Activated CD4-positive, alpha-beta memory T cell treated with anti-CD3 and anti-CD28 coated beads, Interleukin-2, amount 10 ng/mL, durations not matched to agents 7 days and 5 days (primary cell): ENCODE measurements at regions of chr11 and their contacts with region 1.

Region 1: GRCh38 chr11:35066783-35067423 is 72.1 kb upstream of the CD44 start:
- DNase-seq: peak; percentile 62
- H3K4me3 Mint-ChIP-seq: peak overlapping the region; percentile 6
- H3K27ac Mint-ChIP-seq: peak overlapping the region; percentile 79
- H3K4me1 Mint-ChIP-seq: peaks cover 29% of the 10 kb centered on the region
- H3K27me3 Mint-ChIP-seq: peaks cover 4% of the 10 kb centered on the region

Region 2: DNA sequence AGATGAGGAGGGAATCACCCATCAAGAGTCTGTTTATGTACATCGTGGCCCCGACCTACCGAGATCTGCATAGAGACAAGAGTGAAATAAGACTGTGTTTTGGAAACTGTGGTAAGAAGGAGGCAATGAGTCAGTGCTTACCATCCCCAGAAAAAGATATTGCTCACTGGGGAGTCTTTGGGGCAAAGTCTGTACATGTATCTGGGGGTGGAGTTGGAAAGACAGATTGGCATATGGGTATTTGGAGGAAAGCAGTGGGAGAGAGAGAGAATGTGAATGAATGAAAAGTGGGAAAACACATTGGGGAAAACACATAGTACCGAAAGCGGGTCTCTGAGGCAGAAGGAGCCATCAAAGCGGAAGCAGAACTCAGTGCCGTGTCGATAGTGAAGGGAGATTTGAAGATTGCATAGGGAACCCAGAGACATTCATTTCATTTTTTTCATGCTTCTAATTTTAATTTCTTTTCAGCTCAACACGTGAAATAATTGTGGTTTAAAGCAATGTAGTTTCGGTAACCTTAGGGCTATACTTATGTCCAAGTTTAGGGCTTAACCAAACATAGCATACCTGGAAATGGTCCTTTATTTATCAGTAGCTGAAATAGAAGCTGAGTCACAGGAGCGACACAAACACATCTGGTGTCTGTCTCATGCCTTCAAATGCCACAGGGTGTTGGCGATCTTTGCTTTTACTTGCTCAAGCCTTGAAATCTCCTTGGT is 26.5 kb before region 1 on chr11:
- CTCF ChIA-PET with region 1: interaction called, 4 read pairs
- POLR2A ChIA-PET with region 1: interaction called, 10 read pairs
- DNase-seq: peak; percentile 74
- H3K4me3 Mint-ChIP-seq: peak overlapping the region; percentile 82
- H3K27ac Mint-ChIP-seq: peak overlapping the region; percentile 99
- H3K4me1 Mint-ChIP-seq: peaks cover 75% of the 10 kb centered on the region
- H3K27me3 Mint-ChIP-seq: peaks cover 13% of the 10 kb centered on the region